WTC11 (cell line): ENCODE measurements at regions of chr9 and their contacts with region 1.

Region 1: DNA sequence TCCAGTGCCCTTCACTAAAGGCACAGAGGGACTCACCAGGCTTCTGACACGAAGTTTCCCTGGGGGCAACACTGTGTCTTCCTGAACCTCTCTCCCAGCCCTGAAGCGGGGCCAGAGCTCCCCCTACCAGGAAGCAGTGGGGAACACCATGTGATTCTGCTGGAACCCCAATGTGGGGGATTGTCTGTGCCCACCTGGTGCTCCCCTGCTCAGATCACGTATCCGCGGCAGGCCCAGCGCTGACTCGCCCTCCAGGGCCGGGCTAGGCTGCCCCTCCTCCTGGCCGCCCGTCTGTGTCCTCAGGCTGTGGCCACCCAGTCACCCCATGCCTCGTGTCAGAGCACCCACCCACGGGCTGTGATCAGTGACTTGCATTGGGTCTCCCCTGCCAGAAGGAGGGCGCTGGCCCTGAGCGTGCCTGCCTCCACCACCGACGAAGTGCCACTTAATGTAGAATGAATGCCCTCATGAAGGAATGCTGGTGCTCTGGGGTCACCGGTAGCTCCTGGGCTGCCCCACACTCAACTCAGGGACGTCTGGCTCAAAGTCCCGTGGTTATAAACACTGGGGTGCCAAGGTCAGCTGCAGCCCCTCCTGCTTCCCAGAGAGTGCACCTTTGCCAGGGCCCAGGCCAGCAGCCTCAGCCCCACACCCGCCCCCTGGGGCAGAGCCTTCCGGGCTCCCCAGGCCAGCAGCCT is 22.1 kb downstream of the SARDH start:
- DNase-seq: peak; percentile 61
- ATAC-seq: peak; percentile 87
- H3K4me3 Mint-ChIP-seq: no peak overlapping the region
- H3K27ac Mint-ChIP-seq: peak overlapping the region; percentile 23; the same call in 1 of the 2 replicates
- H3K4me1 Mint-ChIP-seq: peaks cover 5% of the 10 kb centered on the region
- H3K27me3 Mint-ChIP-seq: no peaks in the 10 kb centered on the region
- CTCF ChIP-seq: peak; percentile 23; the same call in 1 of the 2 replicates

Region 2: GRCh38 chr9:133701862-133702797 is 13.9 kb before region 1 on chr9:
- CTCF ChIA-PET with region 1: interaction called, 13 read pairs
- POLR2A ChIA-PET with region 1: no interaction called
- DNase-seq: peak; percentile 21
- ATAC-seq: peak; percentile 78
- H3K4me3 Mint-ChIP-seq: no peak overlapping the region
- H3K27ac Mint-ChIP-seq: 0 out of 2 replicates have a peak overlapping the region, but pooled peaks have one; percentile 23
- H3K4me1 Mint-ChIP-seq: peaks cover 4% of the 10 kb centered on the region; the same call in 1 of the 2 replicates
- H3K27me3 Mint-ChIP-seq: no peaks in the 10 kb centered on the region
- CTCF ChIP-seq: no peak

Region 3: GRCh38 chr9:133726401-133727276 is 10.6 kb after region 1 on chr9:
- CTCF ChIA-PET with region 1: interaction called, 15 read pairs
- POLR2A ChIA-PET with region 1: no interaction called
- DNase-seq: peak; percentile 71
- ATAC-seq: peak; percentile 79
- H3K4me3 Mint-ChIP-seq: no peak overlapping the region
- H3K27ac Mint-ChIP-seq: peak overlapping the region; percentile 20; the same call in 1 of the 2 replicates
- H3K4me1 Mint-ChIP-seq: no peaks in the 10 kb centered on the region
- H3K27me3 Mint-ChIP-seq: no peaks in the 10 kb centered on the region; the same call in 1 of the 2 replicates
- CTCF ChIP-seq: peak; percentile 29

Region 4: DNA sequence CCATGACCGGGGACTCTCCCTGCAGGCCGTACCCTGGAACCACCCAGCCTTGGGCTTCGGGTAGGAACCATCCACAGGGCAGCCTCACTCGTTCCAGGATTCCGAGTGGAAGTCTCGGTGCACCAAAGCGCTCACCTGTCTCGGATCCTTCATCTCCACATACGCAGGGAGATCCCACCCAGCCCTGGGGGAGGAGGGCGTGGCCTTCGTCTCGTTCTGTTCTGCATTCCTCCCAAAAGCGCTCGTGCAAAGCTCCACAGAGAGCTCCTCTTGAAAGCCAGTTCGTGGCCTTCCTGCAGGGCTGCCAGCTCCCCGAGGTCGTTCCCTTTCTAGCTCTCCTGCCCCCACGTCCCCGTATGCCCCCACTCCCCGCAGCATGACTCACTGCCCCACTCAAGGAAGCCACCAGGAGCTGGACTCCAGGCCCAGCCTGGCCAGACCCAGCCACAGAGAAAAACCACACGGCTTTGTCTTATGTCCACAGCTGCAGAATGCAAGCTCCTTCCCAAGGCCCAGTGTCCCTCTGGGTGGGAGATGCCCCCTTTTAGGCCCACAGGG is 87.1 kb after region 1 on chr9:
- CTCF ChIA-PET with region 1: no interaction called
- POLR2A ChIA-PET with region 1: no interaction called
- DNase-seq: no peak
- ATAC-seq: no peak
- H3K4me3 Mint-ChIP-seq: no peak overlapping the region
- H3K27ac Mint-ChIP-seq: peak overlapping the region; percentile 33; the same call in 1 of the 2 replicates
- H3K4me1 Mint-ChIP-seq: no peaks in the 10 kb centered on the region
- H3K27me3 Mint-ChIP-seq: no peaks in the 10 kb centered on the region
- CTCF ChIP-seq: no peak